A673 (cell line): ENCODE measurements at regions of chr10 and their contacts with region 1.

Region 1: GRCh38 chr10:70715853-70716795 is 43.8 kb downstream of the ADAMTS14 start:
- DNase-seq: peak; percentile 54
- H3K4me3 ChIP-seq: no peak overlapping the region
- H3K27ac ChIP-seq: no peak overlapping the region
- H3K4me1 ChIP-seq: no peaks in the 10 kb centered on the region
- H3K27me3 ChIP-seq: no peaks in the 10 kb centered on the region
- CTCF ChIP-seq: no peak

Region 2: DNA sequence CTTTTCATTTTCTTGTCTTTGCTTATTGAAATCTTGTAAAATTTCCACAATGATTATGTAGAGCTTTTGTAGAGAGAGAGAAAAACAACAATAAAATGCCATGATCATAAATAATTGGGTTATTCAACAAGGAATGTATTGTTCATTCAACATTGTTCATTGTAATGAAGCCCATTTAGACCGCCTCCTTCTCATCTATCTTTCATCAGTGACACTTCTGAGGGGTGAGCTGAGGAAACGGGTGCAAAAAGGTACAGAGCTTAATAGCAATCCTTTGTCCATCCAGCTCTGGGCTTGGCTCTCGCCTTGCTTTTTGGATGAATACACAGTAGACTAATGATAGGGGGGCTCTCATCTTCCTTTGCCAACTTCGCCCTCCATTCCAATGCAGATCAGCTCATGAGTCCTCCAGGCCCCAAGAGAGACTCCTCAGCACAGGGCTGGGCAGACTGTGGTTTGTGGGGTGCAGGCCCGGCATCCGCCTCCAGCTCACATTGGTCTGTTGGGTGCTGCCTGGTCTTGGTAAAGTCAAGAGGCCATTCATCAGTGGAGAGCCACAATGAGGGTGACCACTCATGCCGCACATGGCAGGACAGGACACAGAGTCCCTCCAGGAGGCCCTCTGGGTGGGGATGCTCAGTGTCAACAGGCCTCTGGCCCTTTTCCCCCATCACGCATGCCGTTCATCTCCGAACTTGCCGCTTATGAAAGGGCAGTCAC is 465.0 kb before region 1 on chr10:
- CTCF ChIA-PET with region 1: no interaction called
- POLR2A ChIA-PET with region 1: no interaction called
- intact Hi-C with region 1: no loop called
- DNase-seq: no peak
- H3K4me3 ChIP-seq: no peak overlapping the region
- H3K27ac ChIP-seq: no peak overlapping the region
- H3K4me1 ChIP-seq: no peaks in the 10 kb centered on the region
- H3K27me3 ChIP-seq: no peaks in the 10 kb centered on the region
- CTCF ChIP-seq: no peak

Region 3: DNA sequence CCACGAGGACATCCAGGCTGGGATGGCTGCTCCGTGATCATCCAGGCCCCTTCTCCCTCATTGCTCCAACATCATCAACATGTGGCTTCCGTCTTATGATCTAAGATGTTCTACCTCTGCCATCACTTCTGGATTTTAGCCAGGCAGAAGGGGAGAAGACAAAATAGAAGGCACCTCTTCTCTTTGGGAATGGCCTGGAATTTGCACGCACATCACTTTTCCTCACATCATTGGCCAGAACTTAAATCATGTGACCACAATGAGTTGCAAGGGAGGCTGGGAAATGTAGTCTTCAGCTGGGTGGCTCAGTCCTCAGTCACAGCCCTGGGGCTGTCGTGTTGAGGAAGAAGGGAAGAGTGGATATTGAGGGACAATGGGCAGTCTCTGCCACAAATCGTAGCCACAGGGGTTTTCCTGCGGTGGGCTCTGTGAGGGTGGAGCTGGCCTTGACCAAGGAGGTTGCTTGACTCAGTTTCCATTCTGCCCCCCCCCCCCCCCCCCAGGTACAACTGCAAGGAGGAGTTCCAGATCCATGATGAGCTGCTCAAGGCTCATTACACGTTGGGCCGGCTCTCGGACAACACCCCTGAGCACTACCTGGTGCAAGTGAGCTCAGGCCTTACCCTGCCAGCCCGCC is 187.3 kb before region 1 on chr10:
- CTCF ChIA-PET with region 1: no interaction called
- POLR2A ChIA-PET with region 1: interaction called, 10 read pairs
- intact Hi-C with region 1: no loop called
- DNase-seq: peak; percentile 75
- H3K4me3 ChIP-seq: no peak overlapping the region
- H3K27ac ChIP-seq: no peak overlapping the region
- H3K4me1 ChIP-seq: no peaks in the 10 kb centered on the region
- H3K27me3 ChIP-seq: no peaks in the 10 kb centered on the region
- CTCF ChIP-seq: no peak